ENCODE measurements at regions of chr19 and their contacts with region 1.

Region 1: GRCh38 chr19:58278157-58279041 is at the start of gene ZNF8:
- DNase-seq: peak; percentile 93
- ATAC-seq: peak; percentile 99
- H3K4me3 ChIP-seq: peak within 1 kb of the TSS; percentile 83
- H3K27ac ChIP-seq: peak within 1 kb of the TSS; percentile 70
- H3K4me1 ChIP-seq: no peaks in the 10 kb centered on the region; the same call in 1 of the 2 replicates
- H3K27me3 ChIP-seq: no peaks in the 10 kb centered on the region
- CTCF ChIP-seq: no peak
- EP300 ChIP-seq: no peak
- POLR2A ChIP-seq: peak; percentile 92
- RAD21 ChIP-seq: no peak
- polyA plus RNA-seq, gene ZNF8: 0.46 to 0.71 TPM

Region 2: GRCh38 chr19:56423276-56423984 is 1855.0 kb before region 1 on chr19:
- CTCF ChIA-PET with region 1: no interaction called
- POLR2A ChIA-PET with region 1: no interaction called
- RAD21 ChIA-PET with region 1: no interaction called
- SMC1A ChIA-PET with region 1: no interaction called
- in situ Hi-C with region 1: loop called (anchors 10 kb)
- intact Hi-C with region 1: no loop called
- DNase-seq: no peak
- ATAC-seq: no peak
- H3K4me3 ChIP-seq: no peak overlapping the region
- H3K27ac ChIP-seq: no peak overlapping the region
- H3K4me1 ChIP-seq: no peaks in the 10 kb centered on the region
- H3K27me3 ChIP-seq: no peaks in the 10 kb centered on the region
- CTCF ChIP-seq: no peak
- EP300 ChIP-seq: no peak
- POLR2A ChIP-seq: no peak
- RAD21 ChIP-seq: no peak

Region 3: DNA sequence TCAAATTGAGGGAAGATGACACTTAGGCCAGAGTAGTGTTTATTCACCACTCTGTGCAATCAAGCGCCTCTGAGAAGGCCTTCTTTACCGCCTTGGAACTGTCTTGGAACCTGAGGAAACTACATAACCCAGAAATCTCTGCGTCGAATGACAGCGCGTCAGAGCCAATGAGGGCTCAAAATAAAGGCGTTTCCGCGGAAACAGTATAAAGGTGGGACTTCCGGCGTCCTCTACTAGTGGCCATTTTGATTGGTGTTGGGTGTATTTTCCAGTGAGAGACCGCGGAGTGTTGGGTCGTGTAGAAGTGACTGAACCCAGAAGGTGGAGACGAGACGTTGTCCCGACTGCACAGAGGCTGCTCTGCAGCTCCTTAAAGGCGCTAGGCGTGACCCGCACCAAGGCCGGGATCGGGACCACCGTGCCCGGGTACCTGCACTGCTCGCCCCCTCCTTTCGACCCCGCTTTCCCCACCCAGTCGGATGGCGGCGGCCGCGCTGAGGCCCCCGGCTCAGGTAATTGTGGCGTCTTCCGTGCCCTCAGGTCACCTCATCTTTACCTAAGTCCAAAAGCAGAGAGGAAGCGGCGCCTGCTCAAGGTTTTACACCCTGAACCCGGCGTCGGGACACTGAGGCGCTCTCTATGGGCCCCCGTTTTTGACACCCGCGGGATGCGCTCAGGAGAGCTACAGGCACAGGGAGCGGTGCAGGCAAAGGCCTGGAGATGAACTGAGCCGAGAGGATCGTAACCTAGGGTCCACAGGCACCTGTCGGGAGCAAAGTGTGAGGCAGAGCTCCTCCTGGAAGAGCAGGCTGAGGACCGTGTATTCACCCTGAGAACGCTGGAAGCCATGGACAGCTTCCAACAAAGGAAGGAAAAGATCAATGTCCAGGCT is 531.6 kb before region 1 on chr19 and contains the start of gene ZNF776:
- CTCF ChIA-PET with region 1: no interaction called
- POLR2A ChIA-PET with region 1: no interaction called
- RAD21 ChIA-PET with region 1: no interaction called
- SMC1A ChIA-PET with region 1: no interaction called
- in situ Hi-C with region 1: no loop called
- intact Hi-C with region 1: loop called (anchors 2 kb)
- DNase-seq: peak; percentile 84
- ATAC-seq: peak; percentile 99
- H3K4me3 ChIP-seq: peak within 1 kb of the TSS; percentile 96
- H3K27ac ChIP-seq: peak within 1 kb of the TSS; percentile 83
- H3K4me1 ChIP-seq: no peaks in the 10 kb centered on the region
- H3K27me3 ChIP-seq: no peaks in the 10 kb centered on the region
- CTCF ChIP-seq: no peak
- EP300 ChIP-seq: no peak
- POLR2A ChIP-seq: peak; percentile 88
- RAD21 ChIP-seq: no peak
- polyA plus RNA-seq, gene ZNF776: 1.9 to 3.1 TPM

Region 4: DNA sequence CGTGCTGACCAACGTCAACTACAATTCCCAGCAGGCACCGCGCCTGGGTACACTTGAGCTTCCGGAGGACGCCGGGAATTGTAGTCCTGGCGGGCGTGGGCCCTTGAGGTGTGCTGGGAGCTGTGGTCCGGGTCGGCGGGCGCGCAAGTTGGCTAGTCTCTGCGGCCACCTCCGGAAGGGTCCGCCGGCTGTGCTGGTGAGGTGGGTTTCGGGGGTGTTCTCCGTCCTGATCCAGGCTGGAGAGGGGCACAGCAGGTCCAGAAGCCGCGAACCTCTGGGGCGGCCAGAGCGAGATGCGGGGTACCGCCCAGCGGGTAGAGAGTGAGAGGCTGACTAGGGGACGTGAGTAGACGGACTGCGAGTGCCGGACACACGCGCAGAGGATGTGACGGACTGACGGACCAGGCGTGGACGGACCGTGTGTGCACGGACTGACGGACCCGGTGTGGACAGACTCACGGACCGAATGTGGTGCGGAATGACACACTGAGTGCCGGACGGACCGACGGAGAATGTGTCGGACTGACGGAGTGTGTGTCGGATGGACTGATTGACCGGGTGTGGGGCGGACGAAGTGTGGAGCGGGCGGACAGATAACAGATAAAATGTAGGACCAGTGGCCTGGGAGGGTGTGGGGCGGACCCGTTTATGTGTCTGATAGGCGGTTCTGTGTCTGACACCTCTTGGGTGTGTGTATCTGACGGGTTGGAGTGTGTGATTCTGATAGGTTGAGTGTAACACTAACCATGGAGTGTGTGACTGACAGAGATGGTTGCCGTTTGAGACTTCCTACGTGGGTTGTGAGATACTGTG is 48.7 kb after region 1 on chr19 and contains the start of gene ZSCAN22:
- CTCF ChIA-PET with region 1: no interaction called
- POLR2A ChIA-PET with region 1: no interaction called
- RAD21 ChIA-PET with region 1: no interaction called
- SMC1A ChIA-PET with region 1: no interaction called
- in situ Hi-C with region 1: no loop called
- intact Hi-C with region 1: no loop called
- DNase-seq: peak; percentile 68
- ATAC-seq: peak; percentile 95
- H3K4me3 ChIP-seq: peak within 1 kb of the TSS; percentile 74
- H3K27ac ChIP-seq: peak within 1 kb of the TSS; percentile 79
- H3K4me1 ChIP-seq: peaks cover 5% of the 10 kb centered on the region
- H3K27me3 ChIP-seq: no peaks in the 10 kb centered on the region
- CTCF ChIP-seq: no peak
- EP300 ChIP-seq: no peak
- POLR2A ChIP-seq: peak; percentile 88
- RAD21 ChIP-seq: no peak
- polyA plus RNA-seq, gene ZSCAN22: 0.49 to 1.7 TPM

Region 5: GRCh38 chr19:58372311-58373133 is 94.1 kb after region 1 on chr19:
- CTCF ChIA-PET with region 1: no interaction called
- POLR2A ChIA-PET with region 1: no interaction called
- RAD21 ChIA-PET with region 1: no interaction called
- SMC1A ChIA-PET with region 1: no interaction called
- in situ Hi-C with region 1: no loop called
- intact Hi-C with region 1: no loop called
- DNase-seq: no peak
- ATAC-seq: no peak
- H3K4me3 ChIP-seq: no peak overlapping the region
- H3K27ac ChIP-seq: no peak overlapping the region
- H3K4me1 ChIP-seq: no peaks in the 10 kb centered on the region
- H3K27me3 ChIP-seq: no peaks in the 10 kb centered on the region
- CTCF ChIP-seq: 0 out of 6 replicates have a peak, but pooled peaks of 2 of the 3 experiments have one; percentile 5
- EP300 ChIP-seq: no peak
- POLR2A ChIP-seq: no peak
- RAD21 ChIP-seq: no peak

Measured in GM12878 (cell line).